B cell (primary cell): ENCODE measurements at regions of chr11 and their contacts with region 1.

Region 1: GRCh38 chr11:6619004-6619745 is at the start of gene TPP1:
- DNase-seq: peak; percentile 97
- ATAC-seq: peak; percentile 92
- H3K4me3 ChIP-seq: peak within 1 kb of the TSS; percentile 82 to 100 (median 96)
- H3K4me3 Mint-ChIP-seq: no peak within 1 kb of the TSS
- H3K27ac ChIP-seq: peak within 1 kb of the TSS; percentile 94 to 97
- H3K27ac Mint-ChIP-seq: no peak within 1 kb of the TSS
- H3K4me1 ChIP-seq: peaks cover 19 to 33% of the 10 kb centered on the region in 2 donors
- H3K4me1 Mint-ChIP-seq: peaks cover 11% of the 10 kb centered on the region
- H3K27me3 ChIP-seq: no peaks in the 10 kb centered on the region
- H3K27me3 Mint-ChIP-seq: no peaks in the 10 kb centered on the region
- CTCF ChIP-seq: no peak
- total RNA-seq, gene TPP1: 191 and 200 TPM in 2 replicates

Region 2: GRCh38 chr11:6646918-6647679 is 27.9 kb after region 1 on chr11:
- CTCF ChIA-PET with region 1: interaction called, 5 read pairs
- POLR2A ChIA-PET with region 1: interaction called, 9 read pairs
- intact Hi-C with region 1: loop called (anchors 2 kb)
- DNase-seq: peak; percentile 72
- ATAC-seq: peak; percentile 74
- H3K4me3 ChIP-seq: peak overlapping the region in 4 of 5 experiments; percentile 5 to 26 (median 16)
- H3K4me3 Mint-ChIP-seq: no peak overlapping the region
- H3K27ac ChIP-seq: peak overlapping the region; percentile 63 to 78
- H3K27ac Mint-ChIP-seq: no peak overlapping the region
- H3K4me1 ChIP-seq: peaks cover 44 to 52% of the 10 kb centered on the region in 2 donors
- H3K4me1 Mint-ChIP-seq: no peaks in the 10 kb centered on the region
- H3K27me3 ChIP-seq: no peaks in the 10 kb centered on the region
- H3K27me3 Mint-ChIP-seq: no peaks in the 10 kb centered on the region
- CTCF ChIP-seq: no peak

Region 3: DNA sequence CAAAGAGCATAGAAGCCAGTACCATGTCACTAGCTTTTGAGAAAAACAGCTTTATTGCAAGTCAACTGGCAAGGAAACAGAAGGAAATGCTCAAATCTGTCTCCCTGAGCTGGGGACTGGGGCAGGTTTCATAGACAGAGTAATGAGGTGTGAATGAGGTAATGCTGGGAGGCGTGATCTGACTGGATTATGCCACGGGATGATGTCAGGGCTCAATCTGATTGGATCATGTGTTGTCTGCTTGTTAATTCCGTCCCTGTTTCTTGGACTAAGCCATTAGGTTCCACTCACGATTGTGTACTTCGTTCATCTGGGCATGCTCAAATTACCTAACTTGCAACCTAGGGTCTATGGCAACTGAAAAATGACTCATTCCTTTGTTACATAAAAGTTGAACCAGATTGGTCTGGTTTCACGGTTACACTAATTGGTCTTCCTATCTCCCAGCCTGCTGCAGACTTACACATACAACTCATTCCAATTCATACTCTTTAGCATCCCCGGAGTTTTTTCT is 206.1 kb after region 1 on chr11:
- CTCF ChIA-PET with region 1: no interaction called
- POLR2A ChIA-PET with region 1: no interaction called
- intact Hi-C with region 1: no loop called
- DNase-seq: no peak
- ATAC-seq: no peak
- H3K4me3 ChIP-seq: no peak overlapping the region
- H3K4me3 Mint-ChIP-seq: no peak overlapping the region
- H3K27ac ChIP-seq: no peak overlapping the region
- H3K27ac Mint-ChIP-seq: no peak overlapping the region
- H3K4me1 ChIP-seq: no peaks in the 10 kb centered on the region
- H3K4me1 Mint-ChIP-seq: no peaks in the 10 kb centered on the region
- H3K27me3 ChIP-seq: no peaks in the 10 kb centered on the region
- H3K27me3 Mint-ChIP-seq: peaks cover 3% of the 10 kb centered on the region
- CTCF ChIP-seq: no peak

Region 4: DNA sequence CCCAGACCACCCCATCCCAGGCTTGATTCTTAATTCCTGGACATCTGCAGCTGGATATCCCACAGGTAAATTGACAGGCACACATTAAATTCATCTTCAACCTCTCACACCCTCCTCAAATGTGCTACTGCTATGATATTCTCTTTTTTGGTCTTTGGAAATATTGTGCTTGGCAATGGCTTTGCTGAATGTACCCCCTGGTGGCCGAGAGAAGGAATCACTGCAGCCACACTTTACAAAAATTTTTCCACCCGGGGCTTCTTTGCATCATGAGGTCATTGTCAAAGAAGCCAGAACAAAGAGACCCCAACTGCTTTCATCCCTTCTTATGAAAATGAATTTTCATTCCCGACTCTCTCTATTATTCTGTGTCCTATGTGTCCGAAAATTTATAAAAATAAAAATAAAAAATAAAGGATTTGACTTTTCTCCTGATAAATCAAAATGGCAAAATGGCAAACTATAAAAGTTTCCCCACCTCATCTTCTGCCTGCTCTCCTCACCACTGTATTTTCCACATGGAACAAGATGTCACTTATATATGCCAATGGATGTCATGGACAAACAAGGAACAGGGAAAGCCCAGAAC is 1069.2 kb after region 1 on chr11:
- CTCF ChIA-PET with region 1: no interaction called
- POLR2A ChIA-PET with region 1: no interaction called
- intact Hi-C with region 1: no loop called
- DNase-seq: peak; percentile 48
- ATAC-seq: peak; percentile 54
- H3K4me3 ChIP-seq: no peak overlapping the region
- H3K4me3 Mint-ChIP-seq: no peak overlapping the region
- H3K27ac ChIP-seq: no peak overlapping the region
- H3K27ac Mint-ChIP-seq: no peak overlapping the region
- H3K4me1 ChIP-seq: no peaks in the 10 kb centered on the region
- H3K4me1 Mint-ChIP-seq: no peaks in the 10 kb centered on the region
- H3K27me3 ChIP-seq: peaks cover 0 to 5% (median 3%) of the 10 kb centered on the region in 4 experiments
- H3K27me3 Mint-ChIP-seq: peaks cover 31% of the 10 kb centered on the region
- CTCF ChIP-seq: peak; percentile 90